Dendritic cell treated with granulocyte-macrophage colony-stimulating factor and Interleukin-4, amounts not matched to agents 40 ng/mL and 50 ng/mL, for 4 days (primary cell): ENCODE measurements at regions of chr9 and their contacts with region 1.

Region 1: DNA sequence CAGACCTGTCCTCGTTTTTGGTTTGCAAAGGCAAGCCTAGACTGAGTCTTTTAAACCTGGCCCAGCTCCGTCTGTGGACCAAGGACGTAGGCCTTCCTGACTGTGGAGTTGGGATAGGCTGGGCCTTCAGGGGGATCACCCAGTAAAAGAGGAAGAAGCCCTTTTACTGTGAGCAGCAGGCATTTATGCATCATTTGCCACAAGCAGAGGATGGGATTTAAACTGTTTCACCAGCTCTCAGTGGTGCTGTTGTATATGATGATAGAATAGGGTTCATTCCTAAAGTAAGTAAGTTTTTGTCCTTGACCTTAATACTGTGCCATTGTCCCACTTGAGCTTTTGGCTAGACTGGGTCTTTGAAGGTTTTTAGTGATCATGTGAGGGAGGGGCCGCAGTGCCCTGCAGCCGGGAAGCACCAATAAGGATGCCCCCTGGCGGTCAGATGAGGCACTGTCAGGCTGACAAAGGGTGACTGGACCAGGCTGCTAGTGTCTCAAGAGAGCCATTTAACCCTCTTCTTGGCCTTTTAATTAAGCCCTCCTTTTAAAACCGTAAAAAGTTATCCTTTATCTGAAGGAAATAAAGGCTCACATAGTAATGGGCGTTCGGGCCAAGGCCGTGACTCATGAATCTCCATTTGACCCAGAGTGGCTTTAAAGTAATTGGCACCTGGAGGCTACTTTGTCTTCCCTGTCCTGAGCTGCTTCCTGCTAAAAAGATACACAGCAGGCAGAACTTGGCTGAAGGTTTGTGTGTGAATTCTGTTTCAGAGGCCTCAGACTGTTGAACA is 74.0 kb downstream of the UBAP1 start:
- H3K4me3 Mint-ChIP-seq: no peak overlapping the region
- H3K27ac Mint-ChIP-seq: no peak overlapping the region
- H3K4me1 Mint-ChIP-seq: no peaks in the 10 kb centered on the region
- H3K27me3 Mint-ChIP-seq: no peaks in the 10 kb centered on the region

Region 2: GRCh38 chr9:34379334-34380033 is 126.6 kb after region 1 on chr9:
- intact Hi-C with region 1: loop called (anchors 2 kb)
- H3K4me3 Mint-ChIP-seq: peak overlapping the region; percentile 78
- H3K27ac Mint-ChIP-seq: peak overlapping the region; percentile 77
- H3K4me1 Mint-ChIP-seq: peaks cover 50% of the 10 kb centered on the region
- H3K27me3 Mint-ChIP-seq: peaks cover 55% of the 10 kb centered on the region